Activated naive CD4-positive, alpha-beta T cell treated with anti-CD3 and anti-CD28 coated beads for 36 hours (primary cell): ENCODE measurements at regions of chr17 and their contacts with region 1.

Region 1: DNA sequence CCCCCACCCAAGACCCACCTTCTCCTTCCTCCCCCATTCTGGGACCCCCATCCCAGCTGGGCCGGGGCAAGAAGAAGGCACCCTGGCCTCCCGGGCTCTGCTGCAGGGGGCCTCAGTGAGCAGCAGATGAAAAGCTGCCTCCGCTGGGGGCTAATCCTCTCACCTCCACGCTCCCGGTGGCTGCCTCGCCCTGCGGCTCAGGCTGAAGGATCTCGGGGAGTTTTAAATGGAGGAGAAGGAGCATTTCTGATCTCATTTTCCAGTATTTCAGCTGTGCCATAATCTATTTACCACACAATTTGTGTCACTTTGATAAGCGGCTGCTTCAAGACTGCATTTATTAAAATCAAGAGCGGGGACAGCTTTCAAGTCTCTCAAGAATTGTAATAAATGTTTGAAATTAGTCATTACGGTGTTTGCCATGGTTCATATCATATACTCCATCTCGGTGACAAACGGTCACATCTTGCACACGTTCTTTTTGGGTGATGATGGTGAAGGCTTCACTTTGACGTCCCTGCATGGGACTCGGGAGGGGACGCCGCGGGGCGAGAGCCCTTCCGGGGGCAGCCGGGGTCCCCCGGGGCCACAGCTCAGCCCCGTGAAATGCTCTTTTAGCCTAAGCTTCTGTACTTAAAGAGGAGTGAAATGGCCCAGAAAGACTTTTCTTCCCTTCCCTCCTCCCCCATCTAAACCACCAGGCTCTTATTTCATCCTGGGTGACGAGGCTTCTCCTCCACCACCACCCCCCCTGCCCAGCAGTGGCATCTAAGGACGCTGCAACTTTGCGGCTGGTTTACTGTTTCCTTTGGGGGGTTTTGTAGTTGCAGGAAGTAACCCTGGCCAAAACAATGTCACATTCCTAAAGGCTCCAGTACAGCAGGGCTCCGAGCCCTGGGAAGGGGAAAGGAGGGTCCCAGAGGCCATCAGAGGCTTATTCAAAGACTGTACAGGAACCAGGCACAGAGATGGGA is 313.1 kb upstream of the TNRC6C start:
- DNase-seq: peak; percentile 80
- H3K4me3 Mint-ChIP-seq: peak overlapping the region; percentile 53
- H3K27ac Mint-ChIP-seq: peak overlapping the region; percentile 85
- H3K4me1 Mint-ChIP-seq: peaks cover 26% of the 10 kb centered on the region
- H3K27me3 Mint-ChIP-seq: no peaks in the 10 kb centered on the region

Region 2: GRCh38 chr17:77444984-77445759 is 200.2 kb before region 1 on chr17:
- CTCF ChIA-PET with region 1: no interaction called
- intact Hi-C with region 1: loop called (anchors 5 kb)
- DNase-seq: peak; percentile 87
- H3K4me3 Mint-ChIP-seq: peak overlapping the region; percentile 58
- H3K27ac Mint-ChIP-seq: peak overlapping the region; percentile 94
- H3K4me1 Mint-ChIP-seq: peaks cover 89% of the 10 kb centered on the region
- H3K27me3 Mint-ChIP-seq: no peaks in the 10 kb centered on the region

Region 3: GRCh38 chr17:77465358-77466041 is 179.9 kb before region 1 on chr17:
- CTCF ChIA-PET with region 1: no interaction called
- intact Hi-C with region 1: no loop called
- DNase-seq: peak; percentile 92
- H3K4me3 Mint-ChIP-seq: peak overlapping the region; percentile 62
- H3K27ac Mint-ChIP-seq: peak overlapping the region; percentile 93
- H3K4me1 Mint-ChIP-seq: peaks cover 86% of the 10 kb centered on the region
- H3K27me3 Mint-ChIP-seq: no peaks in the 10 kb centered on the region

Region 4: GRCh38 chr17:77542551-77543490 is 102.5 kb before region 1 on chr17:
- CTCF ChIA-PET with region 1: interaction called, 9 read pairs
- intact Hi-C with region 1: loop called (anchors 1 kb)
- DNase-seq: peak; percentile 82
- H3K4me3 Mint-ChIP-seq: no peak overlapping the region
- H3K27ac Mint-ChIP-seq: no peak overlapping the region
- H3K4me1 Mint-ChIP-seq: no peaks in the 10 kb centered on the region
- H3K27me3 Mint-ChIP-seq: no peaks in the 10 kb centered on the region

Region 5: GRCh38 chr17:77634710-77635109 is 10.6 kb before region 1 on chr17:
- CTCF ChIA-PET with region 1: interaction called, 3 read pairs
- intact Hi-C with region 1: loop called (anchors 1 kb)
- DNase-seq: peak; percentile 84
- H3K4me3 Mint-ChIP-seq: no peak overlapping the region
- H3K27ac Mint-ChIP-seq: peak overlapping the region; percentile 59
- H3K4me1 Mint-ChIP-seq: peaks cover 17% of the 10 kb centered on the region
- H3K27me3 Mint-ChIP-seq: no peaks in the 10 kb centered on the region

Region 6: DNA sequence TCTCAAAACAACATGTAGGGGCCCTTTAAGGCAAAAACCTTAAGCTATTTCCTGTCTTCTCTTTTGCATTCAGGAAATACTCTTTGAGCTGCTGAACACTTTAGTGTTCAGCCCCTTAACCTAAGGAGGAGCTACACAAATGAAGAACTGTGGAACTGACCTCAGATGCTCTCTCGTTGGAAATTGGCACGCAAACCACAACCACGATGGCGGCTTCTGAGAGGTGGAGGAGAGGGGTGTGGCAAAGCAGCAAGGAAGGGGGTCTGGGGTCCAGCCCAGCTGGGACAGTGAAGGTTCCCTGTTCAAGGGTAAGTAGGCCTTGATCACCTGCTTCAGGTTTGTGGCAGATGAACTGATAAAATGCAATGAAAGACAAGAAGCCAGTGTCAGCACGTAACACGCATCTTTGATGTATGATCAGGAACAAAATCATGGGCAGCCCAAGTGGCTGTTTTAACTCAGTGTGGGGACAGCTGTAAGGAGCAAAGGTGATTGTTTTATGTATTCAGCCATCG is 21.6 kb after region 1 on chr17:
- CTCF ChIA-PET with region 1: interaction called, 3 read pairs
- intact Hi-C with region 1: loop called (anchors 1 kb)
- DNase-seq: peak; percentile 86
- H3K4me3 Mint-ChIP-seq: peak overlapping the region; percentile 94
- H3K27ac Mint-ChIP-seq: peak overlapping the region; percentile 98
- H3K4me1 Mint-ChIP-seq: peaks cover 49% of the 10 kb centered on the region
- H3K27me3 Mint-ChIP-seq: no peaks in the 10 kb centered on the region

Region 7: GRCh38 chr17:77681861-77682260 is 36.5 kb after region 1 on chr17:
- CTCF ChIA-PET with region 1: no interaction called
- intact Hi-C with region 1: no loop called
- DNase-seq: no peak
- H3K4me3 Mint-ChIP-seq: no peak overlapping the region
- H3K27ac Mint-ChIP-seq: no peak overlapping the region
- H3K4me1 Mint-ChIP-seq: no peaks in the 10 kb centered on the region
- H3K27me3 Mint-ChIP-seq: no peaks in the 10 kb centered on the region

Region 8: GRCh38 chr17:77875881-77876509 is 230.6 kb after region 1 on chr17:
- CTCF ChIA-PET with region 1: no interaction called
- intact Hi-C with region 1: no loop called
- DNase-seq: peak; percentile 65
- H3K4me3 Mint-ChIP-seq: no peak overlapping the region
- H3K27ac Mint-ChIP-seq: no peak overlapping the region
- H3K4me1 Mint-ChIP-seq: peaks cover 86% of the 10 kb centered on the region
- H3K27me3 Mint-ChIP-seq: no peaks in the 10 kb centered on the region